ENCODE measurements at regions of chr19 and their contacts with region 1.

Region 1: GRCh38 chr19:8355631-8356402 is 8.1 kb upstream of the ANGPTL4 start:
- DNase-seq: peak in 1 of 2 donors; percentile 48
- ATAC-seq: peak; percentile 34 to 55
- H3K4me3 ChIP-seq: no peak overlapping the region
- H3K27ac ChIP-seq: peak overlapping the region in 2 of 4 donors; percentile 39 to 41
- H3K4me1 ChIP-seq: peaks cover 5 to 30% of the 10 kb centered on the region in 2 donors
- H3K27me3 ChIP-seq: no peaks in the 10 kb centered on the region
- CTCF ChIP-seq: no peak
- POLR2A ChIP-seq: no peak

Region 2: DNA sequence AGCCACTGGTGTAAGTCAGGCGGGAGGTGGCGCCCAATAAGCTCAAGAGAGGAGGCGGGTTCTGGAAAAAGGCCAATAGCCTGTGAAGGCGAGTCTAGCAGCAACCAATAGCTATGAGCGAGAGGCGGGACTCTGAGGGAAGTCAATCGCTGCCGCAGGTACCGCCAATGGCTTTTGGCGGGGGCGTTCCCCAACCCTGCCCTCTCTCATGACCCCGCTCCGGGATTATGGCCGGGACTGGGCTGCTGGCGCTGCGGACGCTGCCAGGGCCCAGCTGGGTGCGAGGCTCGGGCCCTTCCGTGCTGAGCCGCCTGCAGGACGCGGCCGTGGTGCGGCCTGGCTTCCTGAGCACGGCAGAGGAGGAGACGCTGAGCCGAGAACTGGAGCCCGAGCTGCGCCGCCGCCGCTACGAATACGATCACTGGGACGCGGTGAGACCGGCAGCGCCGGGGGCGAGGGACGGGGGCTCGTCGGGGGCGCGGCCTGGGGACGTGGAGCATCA is 1983.2 kb before region 1 on chr19 and contains the start of gene ALKBH7:
- in situ Hi-C with region 1: no loop called
- intact Hi-C with region 1: no loop called
- DNase-seq: peak; percentile 100
- ATAC-seq: peak; percentile 92 to 93
- H3K4me3 ChIP-seq: peak within 1 kb of the TSS; percentile 86 to 99 (median 94)
- H3K27ac ChIP-seq: peak within 1 kb of the TSS; percentile 98 to 100 (median 100)
- H3K4me1 ChIP-seq: peaks cover 0 to 10% of the 10 kb centered on the region in 2 donors
- H3K27me3 ChIP-seq: no peaks in the 10 kb centered on the region
- CTCF ChIP-seq: peak in 1 of 5 experiments; percentile 5
- POLR2A ChIP-seq: peak; percentile 55 to 65
- total RNA-seq, gene ALKBH7: 42.2 to 112 (median 90.4) TPM

Region 3: GRCh38 chr19:8113016-8113416 is 242.8 kb before region 1 on chr19:
- in situ Hi-C with region 1: no loop called
- intact Hi-C with region 1: no loop called
- DNase-seq: no peak
- ATAC-seq: no peak
- H3K4me3 ChIP-seq: no peak overlapping the region
- H3K27ac ChIP-seq: no peak overlapping the region
- H3K4me1 ChIP-seq: no peaks in the 10 kb centered on the region
- H3K27me3 ChIP-seq: no peaks in the 10 kb centered on the region
- CTCF ChIP-seq: no peak
- POLR2A ChIP-seq: no peak

Region 4: GRCh38 chr19:8163763-8164162 is 192.1 kb before region 1 on chr19:
- in situ Hi-C with region 1: no loop called
- intact Hi-C with region 1: no loop called
- DNase-seq: no peak
- ATAC-seq: no peak
- H3K4me3 ChIP-seq: no peak overlapping the region
- H3K27ac ChIP-seq: no peak overlapping the region
- H3K4me1 ChIP-seq: no peaks in the 10 kb centered on the region
- H3K27me3 ChIP-seq: no peaks in the 10 kb centered on the region
- CTCF ChIP-seq: no peak
- POLR2A ChIP-seq: no peak

Region 5: GRCh38 chr19:8377598-8377997 is 21.8 kb after region 1 on chr19:
- in situ Hi-C with region 1: no loop called
- intact Hi-C with region 1: no loop called
- DNase-seq: no peak
- ATAC-seq: no peak
- H3K4me3 ChIP-seq: no peak overlapping the region
- H3K27ac ChIP-seq: no peak overlapping the region
- H3K4me1 ChIP-seq: peaks cover 7% of the 10 kb centered on the region in 2 donors
- H3K27me3 ChIP-seq: no peaks in the 10 kb centered on the region
- CTCF ChIP-seq: no peak
- POLR2A ChIP-seq: no peak

Region 6: DNA sequence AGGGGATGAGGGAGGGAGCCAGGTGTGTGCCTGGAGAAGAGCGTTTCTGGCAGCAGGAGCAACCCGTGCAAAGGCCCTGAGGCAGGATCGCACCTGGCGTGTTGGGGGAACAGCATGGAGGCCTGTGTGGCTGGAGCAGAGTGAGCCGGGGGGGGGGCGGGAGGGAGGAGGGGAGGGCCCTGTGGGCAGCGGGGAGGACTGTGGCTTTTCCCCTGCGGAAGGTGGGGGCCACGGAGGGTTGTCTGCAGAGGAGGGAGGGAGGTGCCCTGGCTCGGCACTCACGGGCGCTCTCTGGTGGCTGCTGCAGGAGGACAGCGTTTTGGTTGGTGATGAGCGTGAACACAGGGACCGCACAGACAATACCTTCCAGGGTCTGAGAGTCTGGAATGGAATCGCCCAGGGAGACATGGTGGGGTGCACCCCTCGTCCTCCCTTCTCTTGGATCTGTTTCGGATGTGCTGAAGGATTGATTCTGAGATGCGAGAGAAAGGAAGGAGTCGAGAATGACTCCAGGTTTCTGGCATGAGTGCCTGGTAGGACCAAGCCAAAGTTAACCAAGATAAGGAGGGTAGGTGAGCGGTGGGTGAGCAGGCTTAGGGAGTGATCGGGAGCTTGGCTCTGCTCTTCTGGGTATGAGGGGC is 40.9 kb after region 1 on chr19:
- in situ Hi-C with region 1: loop called in 3 of 4 experiments (anchors 5 to 10 kb)
- intact Hi-C with region 1: loop called (anchors 1 kb)
- DNase-seq: peak; percentile 41 to 54
- ATAC-seq: peak in 1 of 2 donors; percentile 18
- H3K4me3 ChIP-seq: no peak overlapping the region
- H3K27ac ChIP-seq: peak overlapping the region in 2 of 4 donors; percentile 8 to 100
- H3K4me1 ChIP-seq: peaks cover 54 to 56% of the 10 kb centered on the region in 2 donors
- H3K27me3 ChIP-seq: no peaks in the 10 kb centered on the region
- CTCF ChIP-seq: peak; percentile 35 to 74 (median 65)
- POLR2A ChIP-seq: no peak

Region 7: DNA sequence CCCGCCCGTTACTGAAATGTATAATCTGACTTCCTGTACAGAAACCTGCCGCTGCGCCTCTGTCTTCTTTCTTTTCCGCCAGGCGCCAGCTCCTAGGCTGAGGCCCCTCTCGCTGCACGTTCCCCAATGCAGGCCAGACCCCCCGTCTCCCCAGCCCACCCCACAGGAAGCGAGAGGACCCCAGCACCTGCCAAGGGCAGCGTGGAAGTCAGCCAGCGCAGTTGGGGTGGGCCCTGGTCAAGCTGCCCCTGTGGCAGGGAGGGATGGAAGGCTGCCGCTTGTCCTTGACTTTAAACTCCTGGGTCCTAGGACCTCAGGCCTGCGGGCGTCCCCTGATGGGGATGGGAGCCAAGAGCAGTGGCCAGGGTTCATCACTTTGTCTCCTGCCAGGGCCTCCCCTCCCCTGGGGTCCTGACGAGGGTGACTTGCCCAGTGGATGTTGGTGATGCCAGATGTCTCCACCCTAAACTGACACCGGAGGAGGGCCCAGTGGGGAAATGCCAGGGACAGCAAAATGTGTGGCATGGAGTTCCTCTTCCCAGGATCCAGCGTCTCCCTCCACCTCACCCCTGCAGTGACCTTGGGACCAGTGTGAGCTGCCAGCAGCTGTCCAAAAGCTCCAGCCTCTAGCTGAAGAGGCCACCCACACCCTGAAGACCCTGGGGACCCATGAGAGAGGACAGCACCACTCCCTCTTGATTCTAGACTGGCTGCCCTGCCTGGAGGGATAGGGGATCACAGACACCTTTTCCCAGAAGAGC is 48.8 kb after region 1 on chr19:
- in situ Hi-C with region 1: loop called in 3 of 4 experiments (anchors 5 to 10 kb)
- intact Hi-C with region 1: no loop called
- DNase-seq: no peak
- ATAC-seq: peak in 1 of 2 donors; percentile 26
- H3K4me3 ChIP-seq: no peak overlapping the region
- H3K27ac ChIP-seq: no peak overlapping the region
- H3K4me1 ChIP-seq: no peaks in the 10 kb centered on the region
- H3K27me3 ChIP-seq: no peaks in the 10 kb centered on the region
- CTCF ChIP-seq: no peak
- POLR2A ChIP-seq: no peak

Region 8: DNA sequence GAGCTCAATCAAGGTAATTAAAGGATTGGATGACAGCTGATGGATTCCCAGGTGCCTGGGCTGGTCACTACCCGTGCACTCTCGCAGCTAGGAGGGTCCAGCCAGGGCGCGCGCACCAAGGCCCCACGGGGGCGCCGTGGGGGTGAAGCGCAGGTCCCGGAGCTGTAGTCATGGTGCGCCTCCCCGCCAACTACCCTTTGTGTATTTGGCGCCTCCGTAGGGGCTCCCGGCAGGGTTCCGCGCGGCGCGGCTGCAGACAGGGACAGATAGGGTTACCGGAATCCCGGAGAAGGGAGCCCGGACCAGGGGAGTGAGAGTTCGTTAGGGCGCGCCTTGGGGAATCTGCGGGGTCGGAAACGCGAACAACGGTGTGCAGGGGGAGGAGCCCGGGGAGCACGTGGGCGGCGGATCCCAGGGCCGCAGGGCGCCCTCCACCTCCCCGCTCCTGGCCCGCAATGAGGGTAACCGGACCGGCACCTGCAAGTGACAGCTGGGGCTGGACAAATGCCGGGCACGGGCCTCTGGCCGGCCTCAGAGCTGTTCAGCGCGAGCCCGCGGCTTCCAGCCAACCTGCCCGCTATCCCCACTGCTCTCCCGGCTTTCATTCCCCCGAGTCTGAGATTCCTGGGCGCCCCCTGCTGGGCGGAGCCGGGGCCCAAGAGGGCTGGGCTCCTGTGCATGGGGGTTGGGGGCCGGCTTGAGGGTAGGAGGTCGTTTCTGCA is 150.0 kb after region 1 on chr19:
- in situ Hi-C with region 1: loop called in 2 of 4 experiments (anchors 10 kb)
- intact Hi-C with region 1: loop called (anchors 1 kb)
- DNase-seq: peak; percentile 61 to 88
- ATAC-seq: peak; percentile 90 to 91
- H3K4me3 ChIP-seq: peak overlapping the region; percentile 55 to 71 (median 68)
- H3K27ac ChIP-seq: peak overlapping the region; percentile 71 to 80 (median 72)
- H3K4me1 ChIP-seq: peaks cover 5 to 11% of the 10 kb centered on the region in 2 donors
- H3K27me3 ChIP-seq: no peaks in the 10 kb centered on the region
- CTCF ChIP-seq: peak; percentile 77 to 93 (median 91)
- POLR2A ChIP-seq: peak; percentile 31 to 48

Region 9: GRCh38 chr19:8580710-8581281 is 225.0 kb after region 1 on chr19:
- in situ Hi-C with region 1: no loop called
- intact Hi-C with region 1: loop called (anchors 5 kb)
- DNase-seq: peak; percentile 37 to 50
- ATAC-seq: peak in 1 of 2 donors; percentile 41
- H3K4me3 ChIP-seq: no peak overlapping the region
- H3K27ac ChIP-seq: no peak overlapping the region
- H3K4me1 ChIP-seq: no peaks in the 10 kb centered on the region
- H3K27me3 ChIP-seq: peaks cover 0 to 14% (median 11%) of the 10 kb centered on the region in 3 donors
- CTCF ChIP-seq: peak; percentile 70 to 90 (median 82)
- POLR2A ChIP-seq: no peak